ENCODE measurements at regions of chr19 and their contacts with region 1.

Region 1: GRCh38 chr19:49188626-49189200 is 31.1 kb downstream of the TRPM4 start:
- DNase-seq: no peak
- H3K4me3 Mint-ChIP-seq: no peak overlapping the region
- H3K27ac Mint-ChIP-seq: no peak overlapping the region
- H3K4me1 Mint-ChIP-seq: peaks cover 19% of the 10 kb centered on the region
- H3K27me3 Mint-ChIP-seq: no peaks in the 10 kb centered on the region

Region 2: DNA sequence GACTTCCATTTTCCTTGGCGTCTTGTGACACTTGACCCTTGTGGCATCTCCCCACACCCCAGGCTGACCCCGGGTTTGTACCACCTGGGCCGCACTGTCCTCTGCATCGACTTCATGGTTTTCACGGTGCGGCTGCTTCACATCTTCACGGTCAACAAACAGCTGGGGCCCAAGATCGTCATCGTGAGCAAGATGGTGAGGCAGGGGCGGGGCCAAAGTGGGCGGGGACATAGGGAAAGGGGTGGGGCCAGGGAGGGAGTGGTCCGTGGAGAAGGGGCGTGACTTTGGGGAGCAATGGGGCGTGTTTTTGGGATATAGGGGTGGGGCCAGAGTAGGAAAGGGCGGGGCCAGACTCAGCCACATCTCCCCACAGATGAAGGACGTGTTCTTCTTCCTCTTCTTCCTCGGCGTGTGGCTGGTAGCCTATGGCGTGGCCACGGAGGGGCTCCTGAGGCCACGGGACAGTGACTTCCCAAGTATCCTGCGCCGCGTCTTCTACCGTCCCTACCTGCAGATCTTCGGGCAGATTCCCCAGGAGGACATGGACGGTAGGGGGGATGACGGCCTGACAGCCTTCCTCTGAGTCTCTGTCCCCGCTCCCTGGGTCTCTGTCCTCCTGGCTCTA is 11.6 kb after region 1 on chr19:
- CTCF ChIA-PET with region 1: interaction called, 10 read pairs
- POLR2A ChIA-PET with region 1: no interaction called
- DNase-seq: no peak
- H3K4me3 Mint-ChIP-seq: no peak overlapping the region
- H3K27ac Mint-ChIP-seq: no peak overlapping the region
- H3K4me1 Mint-ChIP-seq: peaks cover 11% of the 10 kb centered on the region
- H3K27me3 Mint-ChIP-seq: no peaks in the 10 kb centered on the region

Measured in activated CD4-positive, alpha-beta T cell treated with anti-CD3 and anti-CD28 coated beads, Interleukin-2, amount 10 ng/mL, durations not matched to agents 7 days and 5 days (primary cell).